Activated B cell treated with CpG ODN at 0.5 μM for 24 hours (primary cell): ENCODE measurements at regions of chr20 and their contacts with region 1.

Region 1: DNA sequence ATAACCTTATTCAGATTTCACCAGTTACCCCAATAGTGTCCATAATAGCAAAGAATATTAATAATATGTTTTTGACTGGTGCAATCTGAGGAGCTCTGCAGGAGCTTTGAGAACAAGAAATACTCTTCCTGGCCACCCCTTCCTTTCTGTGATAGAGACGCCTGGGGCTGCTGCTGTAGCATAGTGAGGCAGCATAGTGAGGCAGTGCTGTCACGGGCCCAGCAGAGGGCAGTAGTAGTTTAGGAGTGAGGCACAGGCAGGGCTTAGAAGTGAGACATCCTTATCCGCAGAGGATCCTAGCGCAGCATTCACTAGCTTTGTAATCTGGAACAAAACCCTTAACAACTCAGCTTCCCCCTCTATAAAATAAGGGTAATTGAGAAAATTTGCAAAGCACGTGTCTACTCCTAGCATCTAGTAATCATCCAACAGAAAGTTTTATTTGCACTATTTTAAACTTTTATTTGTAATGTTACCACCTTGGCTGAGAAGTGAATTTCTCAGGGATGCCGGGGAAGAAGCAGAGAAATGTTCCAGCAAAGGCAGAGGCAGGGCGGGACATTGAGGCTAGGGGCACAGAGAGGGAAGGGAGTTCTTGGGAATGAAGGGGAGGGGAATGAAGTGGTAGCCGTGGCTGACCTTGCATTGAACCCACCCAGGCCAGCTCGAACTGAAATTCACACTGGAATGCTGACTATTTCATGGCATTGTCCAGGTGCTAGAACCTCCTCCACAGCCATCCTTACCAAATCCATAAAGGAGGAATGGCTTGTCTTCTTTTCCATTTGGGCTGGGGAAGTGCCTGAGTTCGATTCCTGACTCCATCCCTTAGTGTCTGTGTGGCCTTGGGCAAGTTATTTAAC is 78.8 kb downstream of the CDS2 start:
- DNase-seq: no peak
- ATAC-seq: peak; percentile 97
- H3K4me3 Mint-ChIP-seq: no peak overlapping the region
- H3K27ac Mint-ChIP-seq: no peak overlapping the region
- H3K4me1 Mint-ChIP-seq: no peaks in the 10 kb centered on the region
- H3K27me3 Mint-ChIP-seq: no peaks in the 10 kb centered on the region
- CTCF ChIP-seq: peak; percentile 79

Region 2: GRCh38 chr20:4937397-4938319 is 267.9 kb before region 1 on chr20:
- CTCF ChIA-PET with region 1: no interaction called
- POLR2A ChIA-PET with region 1: no interaction called
- intact Hi-C with region 1: no loop called
- DNase-seq: no peak
- ATAC-seq: no peak
- H3K4me3 Mint-ChIP-seq: no peak overlapping the region
- H3K27ac Mint-ChIP-seq: no peak overlapping the region
- H3K4me1 Mint-ChIP-seq: peaks cover 42% of the 10 kb centered on the region
- H3K27me3 Mint-ChIP-seq: no peaks in the 10 kb centered on the region
- CTCF ChIP-seq: no peak

Region 3: DNA sequence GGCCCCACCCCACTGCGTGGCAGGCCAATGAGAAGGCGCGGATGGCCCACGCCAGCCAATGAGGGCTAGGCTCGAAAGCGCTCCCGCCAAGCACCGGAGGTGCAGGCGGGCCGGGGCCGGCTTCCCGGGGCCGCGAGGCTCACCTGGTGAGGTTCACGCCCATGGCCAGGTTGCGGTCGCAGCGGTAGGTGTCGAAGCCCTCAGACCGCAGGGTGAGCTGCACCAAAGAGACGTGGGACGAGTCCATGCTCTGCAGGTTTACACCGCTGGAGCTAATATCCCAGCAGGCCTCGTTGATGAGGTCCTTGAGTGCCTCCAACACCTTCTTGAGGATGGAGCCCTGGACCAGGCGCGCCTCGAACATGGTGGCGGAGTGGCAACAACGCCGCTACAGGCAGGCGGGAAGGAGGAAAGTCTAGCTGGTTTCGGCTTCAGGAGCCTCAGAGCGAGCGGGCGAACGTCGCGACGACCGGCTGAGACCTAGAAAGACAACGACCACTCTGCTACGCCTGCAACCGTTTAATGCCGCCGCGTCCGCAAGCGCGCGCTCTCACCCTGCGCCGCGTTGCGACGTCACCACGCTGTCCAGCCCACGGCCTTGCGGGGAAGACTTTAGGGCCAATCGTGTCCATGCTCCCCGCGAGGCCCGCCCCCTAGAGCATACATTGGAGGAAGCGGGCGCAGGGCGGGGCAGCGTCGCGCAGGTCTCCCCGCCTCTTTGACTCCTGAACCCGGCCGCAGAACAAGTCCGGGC is 86.0 kb before region 1 on chr20 and contains the start of gene PCNA:
- CTCF ChIA-PET with region 1: no interaction called
- POLR2A ChIA-PET with region 1: no interaction called
- intact Hi-C with region 1: no loop called
- DNase-seq: peak; percentile 91
- ATAC-seq: peak; percentile 95
- H3K4me3 Mint-ChIP-seq: peak within 1 kb of the TSS; percentile 94
- H3K27ac Mint-ChIP-seq: peak within 1 kb of the TSS; percentile 94
- H3K4me1 Mint-ChIP-seq: peaks cover 27% of the 10 kb centered on the region
- H3K27me3 Mint-ChIP-seq: no peaks in the 10 kb centered on the region
- CTCF ChIP-seq: no peak
- total RNA-seq, gene PCNA: 62.0 and 69.9 TPM in 2 replicates

Region 4: DNA sequence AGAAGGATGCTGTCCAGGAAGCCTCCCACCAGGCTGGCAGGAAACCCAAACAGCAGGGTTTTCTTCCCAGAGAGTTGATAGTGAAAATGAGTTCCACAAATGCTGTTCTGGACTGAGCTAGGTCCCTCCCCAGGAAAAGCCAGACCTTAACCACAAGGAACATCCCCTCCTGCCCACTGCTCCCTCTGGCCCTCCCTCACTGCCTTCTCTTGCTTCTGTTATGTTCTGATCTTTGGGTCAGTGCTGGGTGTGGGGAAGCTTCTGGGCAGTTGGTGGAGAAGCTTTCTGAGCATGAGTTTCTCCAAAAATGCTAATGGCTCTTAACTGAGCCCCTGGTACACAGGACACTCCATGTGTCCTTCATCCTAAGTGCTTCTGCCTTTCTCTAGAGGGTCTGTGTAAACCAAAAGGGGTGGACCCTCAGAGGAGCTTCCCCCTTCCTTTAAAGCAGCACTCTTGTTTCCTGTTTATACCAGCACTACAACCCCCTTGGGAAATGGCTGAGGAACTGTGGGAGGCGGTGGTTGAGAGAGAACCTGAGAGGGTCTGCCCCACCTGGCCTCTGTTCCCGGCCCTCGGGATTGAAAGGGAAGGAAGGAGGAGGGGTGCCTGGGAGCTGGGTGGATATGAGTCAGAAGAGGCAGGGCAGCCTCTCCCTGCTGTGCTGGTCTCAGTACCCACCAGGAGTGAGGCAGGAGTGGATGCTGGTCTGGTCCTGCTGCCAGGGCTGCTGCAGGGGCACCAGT is 36.8 kb before region 1 on chr20:
- CTCF ChIA-PET with region 1: no interaction called
- POLR2A ChIA-PET with region 1: no interaction called
- intact Hi-C with region 1: no loop called
- DNase-seq: no peak
- ATAC-seq: peak; percentile 64
- H3K4me3 Mint-ChIP-seq: peak overlapping the region; percentile 60
- H3K27ac Mint-ChIP-seq: peak overlapping the region; percentile 59
- H3K4me1 Mint-ChIP-seq: peaks cover 87% of the 10 kb centered on the region
- H3K27me3 Mint-ChIP-seq: no peaks in the 10 kb centered on the region
- CTCF ChIP-seq: no peak

Region 5: GRCh38 chr20:5222919-5223634 is 17.5 kb after region 1 on chr20:
- CTCF ChIA-PET with region 1: interaction called, 31 read pairs
- POLR2A ChIA-PET with region 1: no interaction called
- intact Hi-C with region 1: loop called (anchors 1 kb)
- DNase-seq: no peak
- ATAC-seq: no peak
- H3K4me3 Mint-ChIP-seq: no peak overlapping the region
- H3K27ac Mint-ChIP-seq: no peak overlapping the region
- H3K4me1 Mint-ChIP-seq: no peaks in the 10 kb centered on the region
- H3K27me3 Mint-ChIP-seq: peaks cover 2% of the 10 kb centered on the region
- CTCF ChIP-seq: no peak

Region 6: GRCh38 chr20:6074145-6074561 is 868.6 kb after region 1 on chr20:
- CTCF ChIA-PET with region 1: no interaction called
- POLR2A ChIA-PET with region 1: no interaction called
- intact Hi-C with region 1: loop called (anchors 1 kb)
- DNase-seq: no peak
- ATAC-seq: no peak
- H3K4me3 Mint-ChIP-seq: no peak overlapping the region
- H3K27ac Mint-ChIP-seq: no peak overlapping the region
- H3K4me1 Mint-ChIP-seq: no peaks in the 10 kb centered on the region
- H3K27me3 Mint-ChIP-seq: peaks cover 3% of the 10 kb centered on the region
- CTCF ChIP-seq: no peak

Region 7: DNA sequence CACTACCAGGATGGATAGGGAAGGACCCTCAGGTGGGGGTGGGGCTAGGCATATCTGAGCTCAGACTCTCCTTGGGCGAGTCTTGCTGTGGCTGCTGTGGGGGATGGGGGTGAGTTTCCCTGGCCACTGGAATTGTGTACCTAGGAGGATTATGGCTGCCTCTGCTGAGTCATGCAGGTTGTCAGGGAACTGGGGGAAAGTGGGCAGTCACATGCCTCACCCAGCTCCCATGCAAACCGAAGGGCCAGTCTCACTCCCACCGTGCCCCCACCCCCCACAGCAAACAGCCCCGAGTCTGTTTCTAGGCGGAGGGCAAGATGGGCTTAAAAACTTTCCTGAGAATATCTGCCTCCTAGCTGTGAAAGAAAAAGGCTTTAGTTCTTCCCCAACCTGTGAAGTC is 1127.5 kb after region 1 on chr20:
- CTCF ChIA-PET with region 1: no interaction called
- POLR2A ChIA-PET with region 1: no interaction called
- intact Hi-C with region 1: no loop called
- DNase-seq: no peak
- ATAC-seq: no peak
- H3K4me3 Mint-ChIP-seq: no peak overlapping the region
- H3K27ac Mint-ChIP-seq: no peak overlapping the region
- H3K4me1 Mint-ChIP-seq: no peaks in the 10 kb centered on the region
- H3K27me3 Mint-ChIP-seq: no peaks in the 10 kb centered on the region
- CTCF ChIP-seq: no peak